HEK293T (cell line): ENCODE measurements at regions of chrX and their contacts with region 1.

Region 1: GRCh38 chrX:100615005-100615404 is 21.6 kb downstream of the TSPAN6 start:
- DNase-seq: peak; percentile 60

Region 2: DNA sequence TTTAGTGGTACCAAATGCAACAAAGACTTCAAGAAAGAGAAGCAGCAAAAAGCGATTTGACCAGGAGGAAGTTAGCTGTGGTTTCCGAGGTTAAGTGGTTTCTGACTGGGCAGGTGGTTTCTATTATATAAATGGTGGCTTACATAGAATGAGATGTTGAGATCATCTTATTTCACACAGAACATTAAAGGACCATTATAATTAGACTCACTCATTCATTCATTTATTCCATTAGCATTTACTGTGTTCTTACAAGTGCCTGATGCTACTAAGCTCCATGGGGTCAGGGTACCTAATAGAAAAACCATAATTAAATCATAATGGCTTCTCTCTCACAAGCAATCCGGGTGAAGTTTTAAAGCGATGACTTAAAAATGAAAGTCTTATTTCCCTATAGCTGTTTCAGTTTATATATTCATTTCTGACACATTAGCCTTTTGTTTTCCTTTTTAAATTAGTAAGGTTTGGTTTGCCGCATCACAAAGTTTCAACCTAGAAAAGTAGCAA is 11.0 kb after region 1 on chrX:
- CTCF ChIA-PET with region 1: interaction called, 10 read pairs
- POLR2A ChIA-PET with region 1: no interaction called
- DNase-seq: no peak

Region 3: DNA sequence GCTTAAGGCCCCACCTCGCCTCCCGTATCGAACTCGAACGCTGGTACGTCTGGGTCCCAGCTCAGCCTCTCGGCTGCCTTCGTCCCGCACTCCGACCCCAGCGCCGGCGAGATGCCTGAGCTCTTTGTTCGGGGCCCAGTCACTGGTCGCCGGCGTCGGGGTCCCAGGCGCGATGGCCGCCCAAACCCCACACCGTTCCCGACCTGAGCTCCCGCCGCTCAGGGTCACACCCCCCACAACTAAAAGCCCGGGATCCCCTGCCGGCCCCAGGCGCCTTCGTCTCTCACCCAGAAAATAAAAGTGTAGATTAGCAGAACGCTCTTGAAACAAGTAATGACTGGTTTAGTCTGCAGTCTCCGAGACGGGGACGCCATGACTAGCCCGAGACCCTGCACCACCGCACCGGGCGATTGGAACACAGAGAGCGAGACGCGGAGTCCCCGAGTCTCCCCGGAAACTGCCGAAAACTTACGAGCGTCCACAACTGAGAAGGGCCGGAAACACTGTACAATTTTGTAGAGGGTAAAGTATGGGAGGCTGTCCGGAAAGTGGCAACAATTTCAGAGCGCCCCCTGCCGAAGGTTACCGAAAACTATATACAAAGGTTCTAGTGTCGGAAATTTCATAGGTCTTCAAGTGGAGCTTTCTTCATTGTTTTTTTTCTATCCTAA is 21.5 kb after region 1 on chrX and contains the start of gene TSPAN6:
- CTCF ChIA-PET with region 1: interaction called, 10 read pairs
- POLR2A ChIA-PET with region 1: interaction called, 6 read pairs
- DNase-seq: peak; percentile 94